CD4-positive, alpha-beta T cell (primary cell): ENCODE measurements at regions of chr7 and their contacts with region 1.

Region 1: DNA sequence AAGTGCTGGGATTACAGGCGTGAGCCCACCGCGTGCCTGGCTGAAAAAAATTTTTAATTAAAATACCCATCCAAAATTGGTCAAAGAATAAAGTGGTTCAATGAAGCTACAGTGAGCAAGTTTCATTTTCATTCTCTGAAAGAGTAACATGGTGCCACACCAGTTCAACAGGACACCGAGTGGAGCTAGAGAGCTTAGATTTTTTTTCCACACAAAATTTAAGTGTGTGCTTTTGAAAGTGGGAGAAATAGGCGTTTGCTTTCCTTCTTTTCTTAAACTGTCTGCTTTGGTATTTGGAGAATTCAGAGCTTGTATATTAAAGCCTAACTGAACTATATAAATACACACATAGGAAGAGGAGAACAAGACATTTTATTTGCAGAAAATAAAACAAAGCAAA is 43.4 kb downstream of the BPGM start:
- DNase-seq: no peak
- ATAC-seq: no peak
- H3K4me3 ChIP-seq: no peak overlapping the region
- H3K4me3 Mint-ChIP-seq: no peak overlapping the region
- H3K27ac ChIP-seq: no peak overlapping the region
- H3K27ac Mint-ChIP-seq: no peak overlapping the region
- H3K4me1 ChIP-seq: peaks cover 3% of the 10 kb centered on the region
- H3K4me1 Mint-ChIP-seq: peaks cover 4% of the 10 kb centered on the region
- H3K27me3 ChIP-seq: no peaks in the 10 kb centered on the region
- H3K27me3 Mint-ChIP-seq: no peaks in the 10 kb centered on the region
- CTCF ChIP-seq: no peak

Region 2: DNA sequence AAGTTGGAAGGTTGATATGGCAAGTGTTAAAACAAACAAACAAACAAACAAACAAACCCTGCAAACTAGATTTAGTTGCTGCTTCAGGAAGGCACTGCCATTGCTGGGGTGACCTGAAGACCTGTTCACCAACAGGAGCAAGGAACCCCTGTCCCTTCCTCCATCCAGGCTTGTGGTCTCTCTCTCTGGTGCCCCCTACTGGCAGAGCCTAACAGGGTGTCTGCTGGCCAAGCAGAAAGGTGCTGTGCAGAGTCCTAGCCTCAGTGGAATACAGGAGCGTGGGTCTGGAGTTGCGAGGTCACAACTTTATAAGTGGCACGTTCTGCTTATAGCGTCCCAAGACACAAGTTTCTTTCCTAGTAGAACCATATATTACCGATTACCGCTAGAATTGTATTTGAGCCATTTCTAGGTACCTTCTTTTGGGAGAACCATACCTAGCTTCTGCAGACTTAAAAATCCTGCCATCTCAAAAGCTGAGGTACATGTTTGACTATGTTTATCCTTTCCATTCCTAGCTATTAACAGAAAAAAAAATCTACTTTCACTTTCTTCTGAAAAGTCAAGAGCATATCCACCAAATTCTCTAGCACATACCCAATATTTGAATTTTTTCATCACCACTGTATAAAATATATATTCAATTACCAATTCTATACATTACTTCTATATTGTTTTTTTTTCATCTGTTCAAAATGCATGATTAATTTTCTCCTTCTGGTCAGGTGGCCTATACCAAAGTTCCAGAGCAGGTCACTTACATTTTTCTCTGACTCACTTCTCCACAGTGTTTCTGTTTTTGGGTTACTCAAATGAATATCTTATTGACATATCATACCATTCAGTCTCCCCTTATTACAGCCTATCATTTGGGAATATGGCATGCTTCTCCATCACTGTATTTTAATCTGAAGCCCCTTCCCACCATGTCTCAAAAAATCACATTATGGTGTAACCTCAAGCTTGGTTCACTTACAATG is 60.4 kb after region 1 on chr7:
- CTCF ChIA-PET with region 1: interaction called, 4 read pairs
- POLR2A ChIA-PET with region 1: no interaction called
- intact Hi-C with region 1: loop called in 1 of 2 experiments (anchors 5 kb)
- DNase-seq: peak; percentile 49 to 86 (median 62)
- ATAC-seq: peak; percentile 82
- H3K4me3 ChIP-seq: no peak overlapping the region
- H3K4me3 Mint-ChIP-seq: no peak overlapping the region
- H3K27ac ChIP-seq: no peak overlapping the region
- H3K27ac Mint-ChIP-seq: no peak overlapping the region
- H3K4me1 ChIP-seq: no peaks in the 10 kb centered on the region
- H3K4me1 Mint-ChIP-seq: no peaks in the 10 kb centered on the region
- H3K27me3 ChIP-seq: no peaks in the 10 kb centered on the region
- H3K27me3 Mint-ChIP-seq: no peaks in the 10 kb centered on the region
- CTCF ChIP-seq: peak; percentile 85